CD4-positive, alpha-beta T cell (primary cell): ENCODE measurements at regions of chr19 and their contacts with region 1.

Region 1: DNA sequence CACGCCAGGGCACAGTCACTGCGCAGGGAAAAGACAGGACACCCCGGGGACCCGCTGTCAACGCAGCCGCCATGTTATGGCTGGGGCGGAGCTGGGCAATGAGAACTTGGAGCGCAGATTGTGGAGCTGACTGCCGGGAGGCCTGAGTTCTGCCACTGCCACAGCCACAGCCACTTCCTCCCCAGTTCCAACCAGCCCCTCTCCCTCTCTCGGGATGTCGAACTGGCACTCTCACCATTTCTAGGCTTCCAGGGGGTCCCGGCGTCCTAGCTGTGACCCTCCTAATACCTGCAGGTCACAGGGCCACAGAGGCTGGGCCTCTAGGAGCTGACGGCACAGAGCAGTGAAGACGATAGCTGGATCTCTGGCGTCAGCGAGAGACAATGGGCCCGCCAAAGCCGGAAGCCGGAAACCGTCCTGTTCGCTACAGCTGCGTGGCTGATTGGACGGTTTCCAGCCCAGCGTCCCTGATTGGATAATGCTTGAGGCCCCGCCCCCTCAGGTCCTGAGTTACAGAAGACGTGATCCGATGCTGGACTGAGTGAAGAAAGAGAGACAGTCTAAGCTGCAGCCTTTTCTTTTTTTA is at the start of gene ZNF506:
- DNase-seq: peak; percentile 95 to 99 (median 97)
- ATAC-seq: peak; percentile 79
- H3K4me3 ChIP-seq: peak within 1 kb of the TSS; percentile 62
- H3K4me3 Mint-ChIP-seq: peak within 1 kb of the TSS; percentile 99
- H3K27ac ChIP-seq: peak within 1 kb of the TSS; percentile 97
- H3K27ac Mint-ChIP-seq: peak within 1 kb of the TSS; percentile 86
- H3K4me1 ChIP-seq: peaks cover 45% of the 10 kb centered on the region
- H3K4me1 Mint-ChIP-seq: peaks cover 44% of the 10 kb centered on the region
- H3K27me3 ChIP-seq: no peaks in the 10 kb centered on the region
- H3K27me3 Mint-ChIP-seq: no peaks in the 10 kb centered on the region
- CTCF ChIP-seq: no peak
- total RNA-seq, gene ZNF506: 48.0 to 50.7 TPM

Region 2: DNA sequence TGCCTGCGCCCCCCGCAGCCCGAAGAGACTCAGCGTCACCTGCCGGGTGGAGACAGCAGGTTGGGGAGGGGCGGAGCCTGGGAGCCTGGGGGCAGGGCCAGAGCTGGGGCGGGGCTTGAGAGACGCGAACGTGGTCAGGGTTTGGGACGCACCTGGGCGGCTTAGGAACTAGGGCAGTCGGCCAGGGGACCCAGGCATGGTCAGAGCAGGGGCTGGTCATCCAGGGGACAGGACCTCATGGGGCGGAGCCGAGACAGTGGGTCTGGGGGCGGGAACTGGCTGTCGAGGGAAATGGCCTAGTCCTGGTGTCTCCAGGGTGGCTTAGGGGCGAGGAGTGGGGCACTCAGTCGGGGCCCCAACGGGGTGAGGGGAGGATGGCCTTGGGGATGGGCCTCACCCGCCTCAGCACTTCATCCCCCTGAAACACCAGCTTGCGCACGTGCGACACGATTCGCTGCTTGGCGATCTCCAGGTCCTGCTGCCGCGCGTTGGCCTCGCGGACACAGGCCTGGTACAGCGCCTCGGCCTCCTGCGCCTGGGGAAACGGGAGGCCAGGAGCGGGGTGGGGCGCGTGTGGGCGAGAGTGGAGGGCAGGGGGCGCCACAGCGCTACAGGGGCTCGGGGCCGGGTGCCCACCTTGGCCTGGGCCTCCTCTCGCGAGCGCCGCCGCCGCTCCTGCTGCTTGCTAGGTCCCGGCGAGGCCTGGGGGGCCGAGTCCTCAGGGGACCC is 183.8 kb before region 1 on chr19:
- CTCF ChIA-PET with region 1: no interaction called
- POLR2A ChIA-PET with region 1: no interaction called
- intact Hi-C with region 1: no loop called
- DNase-seq: no peak
- ATAC-seq: peak; percentile 39
- H3K4me3 ChIP-seq: no peak overlapping the region
- H3K4me3 Mint-ChIP-seq: no peak overlapping the region
- H3K27ac ChIP-seq: no peak overlapping the region
- H3K27ac Mint-ChIP-seq: no peak overlapping the region
- H3K4me1 ChIP-seq: peaks cover 35% of the 10 kb centered on the region
- H3K4me1 Mint-ChIP-seq: peaks cover 14% of the 10 kb centered on the region
- H3K27me3 ChIP-seq: no peaks in the 10 kb centered on the region
- H3K27me3 Mint-ChIP-seq: no peaks in the 10 kb centered on the region
- CTCF ChIP-seq: no peak

Region 3: GRCh38 chr19:19670070-19670551 is 151.3 kb before region 1 on chr19:
- CTCF ChIA-PET with region 1: no interaction called
- POLR2A ChIA-PET with region 1: interaction called, 96 read pairs
- intact Hi-C with region 1: loop called (anchors 1 to 5 kb)
- DNase-seq: no peak
- ATAC-seq: no peak
- H3K4me3 ChIP-seq: peak overlapping the region; percentile 99
- H3K4me3 Mint-ChIP-seq: peak overlapping the region; percentile 96
- H3K27ac ChIP-seq: peak overlapping the region; percentile 29 to 59
- H3K27ac Mint-ChIP-seq: peak overlapping the region; percentile 95
- H3K4me1 ChIP-seq: peaks cover 66% of the 10 kb centered on the region
- H3K4me1 Mint-ChIP-seq: peaks cover 45% of the 10 kb centered on the region
- H3K27me3 ChIP-seq: no peaks in the 10 kb centered on the region
- H3K27me3 Mint-ChIP-seq: no peaks in the 10 kb centered on the region
- CTCF ChIP-seq: no peak

Region 4: GRCh38 chr19:19805480-19805879 is 16.0 kb before region 1 on chr19:
- CTCF ChIA-PET with region 1: interaction called, 3 read pairs
- POLR2A ChIA-PET with region 1: interaction called, 28 read pairs
- intact Hi-C with region 1: no loop called
- DNase-seq: no peak
- ATAC-seq: no peak
- H3K4me3 ChIP-seq: no peak overlapping the region
- H3K4me3 Mint-ChIP-seq: no peak overlapping the region
- H3K27ac ChIP-seq: no peak overlapping the region
- H3K27ac Mint-ChIP-seq: peak overlapping the region; percentile 64
- H3K4me1 ChIP-seq: peaks cover 8% of the 10 kb centered on the region
- H3K4me1 Mint-ChIP-seq: peaks cover 33% of the 10 kb centered on the region
- H3K27me3 ChIP-seq: no peaks in the 10 kb centered on the region
- H3K27me3 Mint-ChIP-seq: no peaks in the 10 kb centered on the region
- CTCF ChIP-seq: no peak

Region 5: DNA sequence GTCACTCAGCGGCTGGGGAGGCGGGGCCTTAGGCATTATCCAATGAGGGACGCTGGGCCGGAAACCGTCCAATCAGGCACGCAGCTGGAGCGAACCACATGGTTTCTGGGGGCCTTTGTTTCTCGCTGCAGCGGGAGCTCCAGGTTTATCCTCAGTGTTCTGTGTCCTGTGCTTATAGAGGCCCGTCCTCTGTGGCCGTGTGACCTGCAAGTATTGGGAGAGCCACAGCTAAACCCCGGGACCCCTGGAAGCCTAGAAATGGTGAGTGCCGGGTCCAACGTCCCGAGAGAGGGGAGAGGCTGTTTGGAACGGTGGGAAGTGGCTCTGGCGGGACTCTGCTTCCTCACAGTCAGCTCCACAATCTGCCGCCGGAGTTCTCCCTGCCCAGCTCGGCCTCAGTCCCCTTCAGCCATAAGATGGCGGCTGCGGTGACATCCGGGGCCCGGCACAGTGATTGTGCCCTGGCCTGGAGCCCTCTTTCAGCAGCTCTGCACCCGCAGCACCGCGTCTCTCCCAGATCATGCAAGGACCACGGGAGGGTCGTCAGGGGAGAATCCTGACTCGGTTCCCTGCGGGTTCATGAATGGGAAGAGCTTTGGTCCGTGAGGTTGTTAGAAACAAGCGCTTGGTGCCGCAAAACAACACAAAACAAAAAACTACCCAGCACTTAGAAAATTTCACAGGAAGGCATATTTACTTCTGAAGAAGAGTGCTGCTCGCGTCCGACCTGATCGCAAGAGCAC is 44.5 kb after region 1 on chr19 and contains the start of gene ZNF253:
- CTCF ChIA-PET with region 1: interaction called, 3 read pairs
- POLR2A ChIA-PET with region 1: interaction called, 160 read pairs
- intact Hi-C with region 1: loop called (anchors 1 to 2 kb)
- DNase-seq: peak; percentile 88 to 96 (median 94)
- ATAC-seq: peak; percentile 90
- H3K4me3 ChIP-seq: peak within 1 kb of the TSS; percentile 89
- H3K4me3 Mint-ChIP-seq: peak within 1 kb of the TSS; percentile 97
- H3K27ac ChIP-seq: peak within 1 kb of the TSS; percentile 86 to 88
- H3K27ac Mint-ChIP-seq: peak within 1 kb of the TSS; percentile 97
- H3K4me1 ChIP-seq: peaks cover 13% of the 10 kb centered on the region
- H3K4me1 Mint-ChIP-seq: peaks cover 41% of the 10 kb centered on the region
- H3K27me3 ChIP-seq: no peaks in the 10 kb centered on the region
- H3K27me3 Mint-ChIP-seq: no peaks in the 10 kb centered on the region
- CTCF ChIP-seq: no peak
- total RNA-seq, gene ZNF253: 4.9 to 5.2 TPM

Region 6: GRCh38 chr19:19900729-19901444 is 79.4 kb after region 1 on chr19 and contains the start of gene ZNF93:
- CTCF ChIA-PET with region 1: no interaction called
- POLR2A ChIA-PET with region 1: interaction called, 70 read pairs
- intact Hi-C with region 1: loop called (anchors 2 to 5 kb)
- DNase-seq: peak; percentile 80 to 96 (median 85)
- ATAC-seq: peak; percentile 97
- H3K4me3 ChIP-seq: peak within 1 kb of the TSS; percentile 96
- H3K4me3 Mint-ChIP-seq: peak within 1 kb of the TSS; percentile 94
- H3K27ac ChIP-seq: peak within 1 kb of the TSS; percentile 70
- H3K27ac Mint-ChIP-seq: peak within 1 kb of the TSS; percentile 82
- H3K4me1 ChIP-seq: peaks cover 20% of the 10 kb centered on the region
- H3K4me1 Mint-ChIP-seq: peaks cover 47% of the 10 kb centered on the region
- H3K27me3 ChIP-seq: no peaks in the 10 kb centered on the region
- H3K27me3 Mint-ChIP-seq: no peaks in the 10 kb centered on the region
- CTCF ChIP-seq: no peak
- total RNA-seq, gene ZNF93: 4.4 to 5.4 TPM

Region 7: GRCh38 chr19:20182222-20182785 is 360.8 kb after region 1 on chr19:
- CTCF ChIA-PET with region 1: no interaction called
- POLR2A ChIA-PET with region 1: no interaction called
- intact Hi-C with region 1: no loop called
- DNase-seq: no peak
- ATAC-seq: no peak
- H3K4me3 ChIP-seq: no peak overlapping the region
- H3K4me3 Mint-ChIP-seq: no peak overlapping the region
- H3K27ac ChIP-seq: no peak overlapping the region
- H3K27ac Mint-ChIP-seq: no peak overlapping the region
- H3K4me1 ChIP-seq: no peaks in the 10 kb centered on the region
- H3K4me1 Mint-ChIP-seq: peaks cover 11% of the 10 kb centered on the region
- H3K27me3 ChIP-seq: no peaks in the 10 kb centered on the region
- H3K27me3 Mint-ChIP-seq: no peaks in the 10 kb centered on the region
- CTCF ChIP-seq: no peak